Dorsolateral prefrontal cortex (tissue), 120 donors: ENCODE measurements at regions of chr5 and their contacts with region 1.

Region 1: DNA sequence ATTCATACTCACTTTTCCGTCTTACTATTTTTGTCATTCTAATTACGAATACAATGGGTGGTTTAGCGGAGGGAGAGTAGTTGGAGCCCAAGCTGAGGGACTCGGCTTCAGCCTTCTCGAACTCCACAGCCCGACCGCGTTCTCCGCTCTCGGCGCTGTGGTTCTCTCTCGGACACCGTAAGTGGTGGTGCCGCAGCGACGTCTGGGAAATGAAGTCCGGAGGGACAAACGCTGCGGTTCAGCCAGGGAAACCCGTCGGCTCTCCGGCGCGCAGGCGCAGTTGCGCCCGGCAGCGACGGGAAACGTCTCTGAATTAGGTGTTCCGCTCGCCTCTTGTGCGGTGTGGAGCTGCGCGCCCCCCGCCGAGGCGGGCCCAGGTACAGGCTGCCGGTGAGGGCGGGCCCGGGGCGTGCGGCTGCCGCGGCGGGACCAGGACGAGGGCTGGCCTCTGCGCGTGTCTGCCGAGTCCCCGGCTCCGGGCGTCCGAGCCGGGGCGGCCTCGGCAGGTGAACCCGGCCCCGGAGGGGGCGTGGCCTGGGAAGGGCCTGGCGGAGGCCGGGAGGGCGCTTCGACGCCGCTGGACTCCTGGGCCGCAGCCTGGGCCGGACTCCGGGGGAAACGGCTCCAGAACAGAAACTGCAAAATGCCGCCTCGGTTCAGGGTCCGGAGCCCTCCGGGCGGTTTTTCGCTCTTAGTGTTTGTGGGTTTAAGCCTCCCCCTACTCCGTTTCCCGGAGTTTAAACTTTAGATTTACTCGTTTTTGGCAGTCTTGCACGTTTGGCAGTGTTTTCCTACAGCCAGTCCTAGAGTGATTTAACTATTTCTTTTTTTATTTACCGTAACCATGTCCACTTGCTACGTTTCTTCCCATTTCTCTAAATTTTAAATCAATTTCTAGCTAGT is at the start of gene ZNF879:
- DNase-seq: peak; percentile 90 to 97 (median 94)
- H3K4me3 ChIP-seq: peak within 1 kb of the TSS; percentile 52 to 98 (median 82)
- H3K27ac ChIP-seq: peak within 1 kb of the TSS in 57 of 59 donors; percentile 4 to 95 (median 82)
- H3K27me3 ChIP-seq: no peaks in the 10 kb centered on the region
- CTCF ChIP-seq: peak in 39 of 56 donors; percentile 9 to 62 (median 35)
- total RNA-seq, gene ZNF879: 3.4 to 11.5 (median 6.8) TPM

Region 2: DNA sequence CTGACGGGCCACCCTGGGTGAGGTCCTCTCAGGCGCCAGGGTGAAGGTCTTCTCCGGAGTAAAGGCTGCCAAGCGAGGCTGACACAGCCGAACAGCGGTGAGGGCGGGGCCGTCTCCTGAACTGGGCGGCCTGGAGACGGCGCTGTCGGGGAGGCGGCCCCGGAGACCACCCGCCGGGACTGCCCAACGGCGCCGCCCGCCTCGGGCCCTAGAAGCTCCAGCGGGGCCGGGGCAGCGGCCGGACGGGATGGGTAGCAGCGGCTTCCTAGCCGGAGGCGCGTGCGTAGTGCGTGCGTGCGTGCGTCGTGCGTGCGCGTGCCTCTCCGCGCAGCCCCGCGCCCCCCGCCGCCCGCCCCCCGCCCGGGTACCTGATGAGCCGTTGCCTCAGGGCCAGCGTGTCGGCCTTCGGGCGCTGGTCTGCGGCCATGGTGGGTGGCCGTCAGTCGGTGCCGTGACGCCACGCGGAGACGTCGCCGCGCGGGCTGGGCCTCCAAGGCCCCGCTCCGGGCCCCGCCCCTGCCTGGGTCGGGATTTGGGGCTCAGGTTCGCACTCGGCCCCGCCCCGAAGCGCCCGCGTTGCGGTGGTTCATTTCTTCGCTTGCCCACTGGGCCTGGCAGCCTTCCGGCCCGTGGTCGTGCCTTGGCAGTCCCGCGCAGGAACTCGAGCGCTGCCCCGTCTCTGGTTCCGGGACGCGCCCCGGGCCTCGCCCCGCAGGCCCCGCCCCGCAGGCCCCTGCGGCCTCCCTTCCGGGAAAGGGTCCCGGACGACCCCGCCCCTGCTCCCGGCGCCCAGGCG is 791.5 kb before region 1 on chr5 and contains the start of gene PHYKPL:
- intact Hi-C with region 1: loop called in 1 of 2 experiments (anchors 10 kb)
- DNase-seq: peak; percentile 42 to 81 (median 62)
- H3K4me3 ChIP-seq: peak within 1 kb of the TSS; percentile 44 to 97 (median 90)
- H3K27ac ChIP-seq: peak within 1 kb of the TSS; percentile 58 to 99 (median 96)
- H3K27me3 ChIP-seq: no peaks in the 10 kb centered on the region
- CTCF ChIP-seq: peak in 25 of 56 donors; percentile 6 to 44 (median 20)
- total RNA-seq, gene PHYKPL: 36.8 to 114 (median 63.2) TPM

Region 3: GRCh38 chr5:178626484-178627258 is 397.1 kb before region 1 on chr5 and contains the start of gene CLK4:
- intact Hi-C with region 1: loop called in 1 of 2 experiments (anchors 10 kb)
- DNase-seq: peak; percentile 86 to 97 (median 95)
- H3K4me3 ChIP-seq: peak within 1 kb of the TSS; percentile 58 to 99 (median 92)
- H3K27ac ChIP-seq: peak within 1 kb of the TSS; percentile 58 to 99 (median 95)
- H3K27me3 ChIP-seq: no peaks in the 10 kb centered on the region
- CTCF ChIP-seq: peak in 11 of 56 donors; percentile 4 to 43 (median 19)
- total RNA-seq, gene CLK4: 39.0 to 95.3 (median 58.1) TPM

Region 4: DNA sequence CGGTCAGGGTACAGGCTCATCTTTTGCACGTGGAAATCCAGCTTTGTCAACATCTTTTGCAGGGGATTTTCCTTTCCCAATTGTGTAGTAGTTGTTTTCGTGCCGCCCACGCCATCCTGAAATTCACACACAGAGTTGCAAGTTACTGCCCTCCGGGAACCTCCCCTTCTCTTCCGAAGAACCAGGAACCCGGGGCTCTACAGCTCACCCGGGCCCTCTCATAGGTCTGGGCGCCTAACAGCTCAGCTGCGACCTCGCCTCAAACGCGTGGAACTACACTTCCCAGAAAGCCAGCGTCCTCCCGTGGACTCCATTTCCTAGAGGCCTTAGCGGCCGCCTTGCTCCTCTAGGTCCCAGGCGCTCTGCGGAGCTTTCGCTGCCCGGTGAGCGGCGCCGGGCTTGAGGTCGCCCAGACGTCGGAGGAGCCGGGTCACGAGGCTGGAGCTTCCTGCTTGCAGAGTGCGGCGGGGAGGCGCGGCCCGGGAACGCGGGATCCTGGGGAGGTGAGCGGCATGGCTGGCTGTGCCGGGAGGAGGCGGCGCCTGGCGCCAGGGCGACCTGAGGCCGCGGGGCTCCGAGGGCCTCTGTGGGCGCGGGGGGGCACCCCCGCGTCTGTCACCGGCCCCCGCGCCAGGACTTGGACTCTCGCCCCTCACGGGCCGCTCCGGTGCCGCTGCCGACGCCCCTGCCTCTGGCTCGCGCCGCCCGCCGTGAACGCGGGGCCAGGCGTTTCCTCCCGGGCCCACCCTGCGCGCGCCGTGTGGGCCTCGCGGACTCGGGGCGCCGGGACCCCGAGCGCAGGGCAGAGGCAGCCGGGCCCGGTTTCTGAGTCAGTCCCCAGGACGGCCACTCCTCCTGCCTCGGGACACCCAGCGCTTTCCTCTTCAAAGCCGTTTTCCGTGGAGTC is 163.9 kb before region 1 on chr5 and contains the start of gene ZNF354B:
- intact Hi-C with region 1: loop called in 1 of 2 experiments (anchors 2 kb)
- DNase-seq: peak; percentile 77 to 95 (median 92)
- H3K4me3 ChIP-seq: peak within 1 kb of the TSS; percentile 56 to 95 (median 83)
- H3K27ac ChIP-seq: peak within 1 kb of the TSS in 57 of 59 donors; percentile 6 to 91 (median 78)
- H3K27me3 ChIP-seq: no peaks in the 10 kb centered on the region
- CTCF ChIP-seq: peak in 47 of 56 donors; percentile 14 to 66 (median 45)
- total RNA-seq, gene ZNF354B: 13.5 to 33.5 (median 21.8) TPM

Region 5: GRCh38 chr5:178895651-178896571 is 127.9 kb before region 1 on chr5 and contains the start of gene ZFP2:
- intact Hi-C with region 1: loop called in 1 of 2 experiments (anchors 10 kb)
- DNase-seq: peak; percentile 47 to 85 (median 72)
- H3K4me3 ChIP-seq: peak within 1 kb of the TSS; percentile 60 to 97 (median 87)
- H3K27ac ChIP-seq: peak within 1 kb of the TSS; percentile 58 to 95 (median 83)
- H3K27me3 ChIP-seq: no peaks in the 10 kb centered on the region
- CTCF ChIP-seq: peak in 16 of 56 donors; percentile 8 to 34 (median 21)
- total RNA-seq, gene ZFP2: 2.9 to 11.1 (median 5.7) TPM

Region 6: DNA sequence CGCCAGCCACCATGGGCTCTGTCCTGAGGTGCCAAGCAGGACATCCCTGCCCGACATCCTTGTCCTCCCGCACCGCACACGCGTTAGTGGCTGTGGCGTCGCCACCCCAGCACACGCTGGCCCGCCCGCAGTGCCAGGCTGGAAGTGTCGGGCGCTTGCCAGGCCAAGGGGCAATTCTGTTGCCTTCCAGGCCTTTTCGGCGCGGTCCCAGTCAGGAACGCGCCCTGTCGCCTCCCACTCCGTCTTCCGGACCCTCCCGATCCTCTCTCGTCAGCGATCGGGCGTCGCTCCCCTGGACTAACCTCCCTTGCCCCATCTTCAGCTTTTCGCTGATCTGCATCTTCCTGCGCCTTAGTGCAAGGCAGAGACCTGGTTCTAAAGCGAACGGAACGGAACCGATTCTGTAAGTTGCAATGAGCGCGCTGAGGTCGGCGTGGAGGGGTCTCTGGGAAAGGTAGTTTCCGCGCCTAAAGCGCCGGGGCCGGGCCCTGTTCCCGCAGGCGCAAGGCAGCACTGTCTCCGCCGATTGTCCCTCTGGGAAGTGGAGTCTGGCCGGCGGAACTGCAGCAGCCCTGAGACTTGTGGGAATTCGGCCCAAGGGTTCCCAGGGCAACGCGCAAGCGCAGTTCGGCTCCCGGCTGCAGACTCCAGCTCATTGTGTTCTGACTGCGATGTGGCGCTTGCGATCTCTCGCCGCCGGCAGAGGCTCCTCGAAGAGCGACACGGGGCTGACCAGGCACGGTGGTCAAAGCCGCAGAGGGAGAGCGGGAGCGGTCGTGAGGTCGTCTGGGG is 83.0 kb before region 1 on chr5 and contains the start of gene ZNF454:
- intact Hi-C with region 1: loop called (anchors 2 kb)
- DNase-seq: peak; percentile 92 to 98 (median 96)
- H3K4me3 ChIP-seq: peak within 1 kb of the TSS; percentile 54 to 98 (median 83)
- H3K27ac ChIP-seq: peak within 1 kb of the TSS in 56 of 59 donors; percentile 3 to 91 (median 80)
- H3K27me3 ChIP-seq: no peaks in the 10 kb centered on the region
- CTCF ChIP-seq: peak in 41 of 56 donors; percentile 7 to 57 (median 34)
- total RNA-seq, gene ZNF454: 6.5 to 17.7 (median 10.3) TPM

Region 7: DNA sequence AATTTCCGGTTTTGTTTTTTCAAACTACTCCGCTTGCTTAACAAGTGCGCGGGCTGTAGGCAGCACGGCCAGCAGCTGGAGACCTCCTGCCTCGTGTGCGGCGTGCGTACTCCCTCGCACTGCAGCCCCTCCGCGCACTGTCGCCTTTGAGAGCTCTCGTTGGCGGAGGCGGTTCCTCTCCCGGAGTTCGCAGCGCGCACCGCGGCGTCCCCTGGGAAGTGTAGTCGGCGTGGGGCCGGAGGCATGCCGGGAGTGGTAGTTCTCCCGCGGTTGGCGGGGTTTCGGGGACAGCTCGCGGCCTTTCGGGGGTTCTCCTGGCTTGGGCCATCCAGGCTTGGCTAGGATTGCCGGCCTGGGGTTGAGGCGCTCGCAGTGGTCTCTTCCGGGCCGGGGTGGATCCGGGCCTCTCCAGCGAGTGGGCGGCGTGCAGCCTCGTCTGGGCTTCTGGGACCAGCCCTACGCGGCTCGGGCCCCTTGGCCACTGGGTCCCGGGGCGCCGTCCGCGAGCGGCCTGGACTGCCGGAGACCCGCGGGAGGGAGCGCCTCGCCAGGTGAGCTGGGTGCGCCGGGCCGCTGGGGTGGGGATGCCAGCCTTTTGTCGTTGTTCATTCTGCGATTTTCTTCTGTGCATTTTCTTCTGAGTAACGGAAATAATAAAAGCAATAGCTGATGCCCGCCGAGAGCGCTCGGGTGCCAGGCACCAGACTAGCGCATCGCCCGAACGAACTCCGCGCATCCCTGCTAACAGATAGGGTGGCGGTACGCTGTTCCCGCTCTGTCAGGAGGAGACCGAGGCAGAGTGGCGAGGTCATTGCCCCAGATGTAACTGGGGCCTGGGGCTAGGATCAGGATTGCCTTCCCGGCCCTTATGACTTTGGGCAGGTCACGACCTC is 36.6 kb after region 1 on chr5 and contains the start of gene ZNF354C:
- intact Hi-C with region 1: loop called in 1 of 2 experiments (anchors 1 kb)
- DNase-seq: peak; percentile 78 to 94 (median 85)
- H3K4me3 ChIP-seq: peak within 1 kb of the TSS; percentile 47 to 97 (median 79)
- H3K27ac ChIP-seq: peak within 1 kb of the TSS in 58 of 59 donors; percentile 7 to 87 (median 74)
- H3K27me3 ChIP-seq: peaks cover 0 to 7% (median 0%) of the 10 kb centered on the region in 45 donors
- CTCF ChIP-seq: peak in 36 of 56 donors; percentile 7 to 60 (median 28)
- total RNA-seq, gene ZNF354C: 4.6 to 10.9 (median 7.7) TPM